ENCODE measurements at regions of chr14 and their contacts with region 1.

Region 1: DNA sequence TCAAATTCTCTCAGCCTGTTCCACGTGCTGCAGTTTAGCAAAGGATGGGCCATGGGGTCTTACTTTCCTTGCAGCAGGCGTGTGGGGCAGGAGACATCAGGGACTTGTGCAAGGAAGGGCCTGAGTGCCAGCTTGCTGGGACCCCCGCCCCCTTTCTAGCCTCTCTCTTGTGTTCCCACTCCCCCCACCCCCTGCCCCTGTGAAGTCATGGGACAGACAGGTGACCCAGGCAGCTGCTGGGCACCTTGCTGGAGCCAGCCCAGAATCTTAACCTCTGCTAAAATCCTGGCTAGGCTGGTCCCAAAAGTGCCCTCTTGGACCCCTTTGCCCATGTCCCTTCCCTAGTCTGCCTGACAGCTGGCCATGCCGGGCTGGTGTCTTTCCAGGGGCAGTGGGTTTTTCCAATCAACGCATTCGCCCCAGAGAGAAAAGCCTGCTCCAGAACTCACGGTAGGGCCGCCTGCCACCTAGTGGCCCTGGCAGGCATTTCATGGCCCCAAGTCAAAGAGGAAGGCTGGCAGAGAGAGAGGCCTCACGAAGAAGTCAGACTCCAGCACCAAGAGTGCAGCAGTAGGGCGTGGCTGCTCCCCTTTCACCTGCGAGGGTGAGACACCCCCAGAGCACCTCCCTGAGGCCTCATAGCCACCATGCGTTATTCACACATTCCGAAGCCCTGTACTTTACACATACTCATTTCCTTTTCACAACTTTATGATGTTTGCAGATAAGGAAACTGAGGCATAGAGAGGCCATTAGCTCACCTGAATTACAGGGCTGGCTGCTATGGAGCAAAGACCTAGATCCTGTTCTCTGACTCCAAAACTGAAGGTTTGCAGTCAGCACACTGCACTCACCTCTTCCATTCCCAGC is 67.4 kb downstream of the LGMN start:
- DNase-seq: peak; percentile 64 to 77
- ATAC-seq: peak; percentile 40 to 72 (median 61)
- H3K4me3 ChIP-seq: no peak overlapping the region
- H3K27ac ChIP-seq: peak overlapping the region in 1 of 10 donors; percentile 2
- H3K4me1 ChIP-seq: peaks cover 0 to 28% (median 5%) of the 10 kb centered on the region in 9 donors
- H3K27me3 ChIP-seq: no peaks in the 10 kb centered on the region
- CTCF ChIP-seq: peak; percentile 85 to 94 (median 92)

Region 2: GRCh38 chr14:92121670-92122350 is 559.2 kb before region 1 on chr14 and contains the starts of genes CPSF2 and NDUFB1:
- intact Hi-C with region 1: loop called in 2 of 10 experiments (anchors 10 kb)
- DNase-seq: peak; percentile 87 to 92
- ATAC-seq: peak; percentile 91 to 97 (median 94)
- H3K4me3 ChIP-seq: peak within 1 kb of the TSS; percentile 64 to 98 (median 84)
- H3K27ac ChIP-seq: peak within 1 kb of the TSS; percentile 83 to 100 (median 96)
- H3K4me1 ChIP-seq: peaks cover 4 to 66% (median 42%) of the 10 kb centered on the region in 9 donors
- H3K27me3 ChIP-seq: no peaks in the 10 kb centered on the region
- CTCF ChIP-seq: peak in 1 of 9 donors; percentile 9
- total RNA-seq, gene CPSF2: 35.0 to 50.3 (median 43.2) TPM
- total RNA-seq, gene NDUFB1: 340 to 642 (median 481) TPM

Region 3: DNA sequence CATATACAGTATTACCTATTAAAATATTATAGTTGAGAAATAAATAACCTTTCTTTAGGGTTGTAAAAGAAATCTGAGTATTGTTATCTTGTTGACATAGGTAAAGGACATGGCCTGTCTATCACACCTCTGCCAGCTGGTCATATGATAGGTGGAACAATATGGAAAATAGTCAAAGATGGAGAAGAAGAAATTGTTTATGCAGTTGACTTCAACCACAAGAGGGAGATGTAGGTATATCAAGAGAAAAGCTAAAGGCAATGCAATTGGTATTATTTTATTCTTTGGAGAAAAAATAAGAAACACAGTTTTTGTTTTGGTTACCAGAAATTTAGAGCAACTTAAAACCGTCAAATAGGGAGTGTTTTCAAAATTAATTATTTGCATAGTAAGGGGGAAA is 545.7 kb before region 1 on chr14:
- intact Hi-C with region 1: loop called in 7 of 10 experiments (anchors 5 to 10 kb)
- DNase-seq: no peak
- ATAC-seq: no peak
- H3K4me3 ChIP-seq: no peak overlapping the region
- H3K27ac ChIP-seq: no peak overlapping the region
- H3K4me1 ChIP-seq: peaks cover 0 to 4% (median 0%) of the 10 kb centered on the region in 9 donors
- H3K27me3 ChIP-seq: no peaks in the 10 kb centered on the region
- CTCF ChIP-seq: peak in 8 of 9 donors; percentile 33 to 71 (median 52)

Region 4: GRCh38 chr14:92144708-92145107 is 536.3 kb before region 1 on chr14:
- intact Hi-C with region 1: loop called in 7 of 10 experiments (anchors 5 to 10 kb)
- DNase-seq: no peak
- ATAC-seq: no peak
- H3K4me3 ChIP-seq: no peak overlapping the region
- H3K27ac ChIP-seq: no peak overlapping the region
- H3K4me1 ChIP-seq: no peaks in the 10 kb centered on the region
- H3K27me3 ChIP-seq: no peaks in the 10 kb centered on the region
- CTCF ChIP-seq: no peak

Region 5: DNA sequence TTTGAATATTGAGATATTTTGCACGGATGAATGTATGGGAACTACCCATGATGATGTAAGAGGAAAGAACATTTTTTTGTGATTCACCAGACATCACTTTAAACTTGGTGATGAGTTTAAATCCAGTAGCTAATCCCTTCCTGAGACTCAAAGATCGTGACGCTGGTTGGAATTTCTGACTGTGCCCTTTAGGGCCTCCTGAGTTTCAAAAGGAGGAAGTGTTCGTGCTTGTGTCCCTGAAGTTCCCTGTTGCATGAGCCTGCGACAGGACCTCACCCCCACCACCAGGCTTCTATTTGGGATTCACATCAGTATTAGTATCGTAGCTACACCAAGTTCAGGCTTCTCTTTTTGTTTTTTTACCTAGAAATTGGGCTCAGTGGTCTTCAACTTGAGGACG is 186.0 kb before region 1 on chr14:
- intact Hi-C with region 1: loop called in 1 of 10 experiments (anchors 10 kb)
- DNase-seq: peak in 1 of 2 donors; percentile 10
- ATAC-seq: peak in 1 of 8 donors; percentile 37
- H3K4me3 ChIP-seq: no peak overlapping the region
- H3K27ac ChIP-seq: peak overlapping the region in 1 of 10 donors; percentile 76
- H3K4me1 ChIP-seq: peaks cover 0 to 60% (median 4%) of the 10 kb centered on the region in 9 donors
- H3K27me3 ChIP-seq: no peaks in the 10 kb centered on the region
- CTCF ChIP-seq: no peak

Region 6: DNA sequence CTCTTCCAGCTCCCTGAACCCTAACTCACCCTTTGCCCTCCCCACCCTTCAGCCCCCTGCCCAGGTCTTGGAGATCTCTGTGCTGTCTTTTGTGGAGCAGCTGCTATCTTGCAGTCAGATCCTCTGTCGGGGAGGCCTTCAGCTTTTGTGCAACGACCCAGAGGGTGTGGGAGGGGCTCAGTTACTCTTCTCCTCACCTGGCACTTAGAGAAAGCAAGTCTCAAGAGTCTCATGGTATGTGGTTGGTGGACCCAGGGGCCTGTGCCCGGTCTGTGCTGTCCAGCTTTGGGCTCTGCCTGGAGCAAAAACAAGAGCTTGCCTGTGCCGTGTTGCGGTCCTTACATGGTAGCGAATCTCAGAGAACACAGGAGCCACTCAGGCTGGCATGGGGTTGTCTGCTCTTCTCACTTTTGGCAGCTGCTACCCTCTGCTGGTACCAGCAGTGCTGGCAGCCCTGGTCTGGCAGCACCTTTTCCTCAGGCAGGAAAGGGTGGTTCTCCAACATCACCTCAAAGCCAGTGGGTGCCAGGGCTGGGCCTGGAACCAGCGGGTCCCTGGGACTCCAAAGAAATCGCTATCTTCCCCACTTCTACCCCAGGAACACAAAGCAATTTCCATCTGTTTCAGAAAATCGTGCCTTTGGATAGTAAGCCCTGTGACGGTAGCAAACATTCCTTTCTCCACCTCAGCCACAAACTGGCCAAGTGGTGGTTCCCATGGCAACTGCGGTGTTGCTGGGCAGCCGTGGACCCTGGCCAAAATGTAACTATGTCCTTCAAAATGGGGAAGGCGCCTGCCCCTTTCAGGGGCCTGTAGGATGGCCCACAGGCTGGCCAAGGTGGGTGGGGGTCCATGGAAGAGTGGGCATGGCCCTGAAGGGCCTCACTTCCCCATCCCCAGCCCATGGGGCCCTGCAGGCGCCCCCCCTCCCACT is 77.4 kb before region 1 on chr14:
- intact Hi-C with region 1: loop called in 1 of 10 experiments (anchors 5 kb)
- DNase-seq: peak; percentile 37 to 52
- ATAC-seq: peak; percentile 85 to 94 (median 88)
- H3K4me3 ChIP-seq: no peak overlapping the region
- H3K27ac ChIP-seq: peak overlapping the region in 3 of 10 donors; percentile 42 to 77 (median 64)
- H3K4me1 ChIP-seq: peaks cover 0 to 46% (median 24%) of the 10 kb centered on the region in 9 donors
- H3K27me3 ChIP-seq: no peaks in the 10 kb centered on the region
- CTCF ChIP-seq: peak in 7 of 9 donors; percentile 28 to 66 (median 58)